Naive thymus-derived CD4-positive, alpha-beta T cell (primary cell): ENCODE measurements at regions of chr6 and their contacts with region 1.

Region 1: DNA sequence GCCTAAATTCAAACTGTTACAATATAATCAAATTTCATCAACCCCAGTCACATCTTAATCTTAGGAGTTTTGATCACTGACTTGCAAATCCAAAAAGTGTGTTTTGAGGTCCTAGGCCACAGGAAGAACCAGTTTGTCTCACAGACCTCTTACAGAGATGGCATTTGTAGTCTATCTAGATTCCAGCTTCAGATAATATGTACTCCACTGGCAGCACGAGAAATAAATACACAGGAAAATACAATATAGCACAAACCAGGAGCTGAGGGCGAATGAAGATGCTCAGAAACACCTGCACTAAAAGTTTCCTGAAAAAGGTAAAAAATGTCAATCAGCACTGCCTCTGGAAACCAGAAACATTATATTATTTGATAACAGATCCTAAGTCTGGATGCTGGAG is 647 bp upstream of the BTN3A3 start:
- DNase-seq: peak in 3 of 9 donors; percentile 7 to 35 (median 15)
- ATAC-seq: no peak
- H3K4me3 ChIP-seq: peak overlapping the region; percentile 94
- H3K4me3 Mint-ChIP-seq: peak overlapping the region; percentile 89 to 100 (median 98)
- H3K27ac ChIP-seq: peak overlapping the region; percentile 99
- H3K27ac Mint-ChIP-seq: peak overlapping the region; percentile 95 to 100 (median 99)
- H3K4me1 ChIP-seq: peaks cover 16 to 19% of the 10 kb centered on the region in 2 donors
- H3K4me1 Mint-ChIP-seq: peaks cover 27 to 52% (median 41%) of the 10 kb centered on the region in 7 donors
- H3K27me3 ChIP-seq: no peaks in the 10 kb centered on the region
- H3K27me3 Mint-ChIP-seq: no peaks in the 10 kb centered on the region

Region 2: GRCh38 chr6:26421259-26422144 is 18.2 kb before region 1 on chr6:
- CTCF ChIA-PET with region 1: no interaction called
- POLR2A ChIA-PET with region 1: no interaction called
- intact Hi-C with region 1: loop called (anchors 1 kb)
- DNase-seq: peak; percentile 11 to 71 (median 62)
- ATAC-seq: peak; percentile 96
- H3K4me3 ChIP-seq: peak overlapping the region; percentile 79
- H3K4me3 Mint-ChIP-seq: no peak overlapping the region
- H3K27ac ChIP-seq: peak overlapping the region; percentile 71
- H3K27ac Mint-ChIP-seq: peak overlapping the region in 2 of 9 donors; percentile 43 to 79
- H3K4me1 ChIP-seq: peaks cover 5 to 9% of the 10 kb centered on the region in 2 donors
- H3K4me1 Mint-ChIP-seq: peaks cover 0 to 16% (median 3%) of the 10 kb centered on the region in 7 donors
- H3K27me3 ChIP-seq: no peaks in the 10 kb centered on the region
- H3K27me3 Mint-ChIP-seq: no peaks in the 10 kb centered on the region

Region 3: DNA sequence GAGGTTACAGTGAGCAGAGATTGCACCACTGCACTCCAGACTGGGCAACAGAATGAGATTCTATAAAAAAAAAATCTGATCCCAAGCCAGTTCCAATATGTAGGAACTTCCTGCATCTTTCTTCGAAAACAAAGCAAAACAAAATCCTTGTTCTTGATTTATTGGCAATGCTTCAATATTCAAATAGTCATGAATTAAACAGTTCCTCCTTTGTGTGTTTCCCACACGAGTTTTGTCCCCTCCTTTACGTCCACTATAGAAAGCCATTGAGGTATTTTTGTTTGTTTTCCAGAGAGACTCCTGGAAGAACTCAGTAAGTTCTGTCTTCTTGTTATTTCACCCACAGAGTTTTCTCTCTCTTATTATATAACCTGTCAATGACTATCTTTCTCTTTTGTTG is 68.0 kb after region 1 on chr6:
- CTCF ChIA-PET with region 1: no interaction called
- POLR2A ChIA-PET with region 1: no interaction called
- intact Hi-C with region 1: no loop called
- DNase-seq: no peak
- ATAC-seq: no peak
- H3K4me3 ChIP-seq: no peak overlapping the region
- H3K4me3 Mint-ChIP-seq: no peak overlapping the region
- H3K27ac ChIP-seq: no peak overlapping the region
- H3K27ac Mint-ChIP-seq: no peak overlapping the region
- H3K4me1 ChIP-seq: no peaks in the 10 kb centered on the region
- H3K4me1 Mint-ChIP-seq: peaks cover 0 to 1% (median 0%) of the 10 kb centered on the region in 7 donors
- H3K27me3 ChIP-seq: peaks cover 6 to 9% of the 10 kb centered on the region in 2 donors
- H3K27me3 Mint-ChIP-seq: peaks cover 8 to 33% (median 11%) of the 10 kb centered on the region in 5 donors

Region 4: GRCh38 chr6:26532699-26533531 is 93.3 kb after region 1 on chr6:
- CTCF ChIA-PET with region 1: no interaction called
- POLR2A ChIA-PET with region 1: interaction called, 4 read pairs
- intact Hi-C with region 1: loop called in 1 of 2 experiments (anchors 1 kb)
- DNase-seq: peak; percentile 67 to 94 (median 93)
- ATAC-seq: peak; percentile 57
- H3K4me3 ChIP-seq: peak overlapping the region; percentile 93
- H3K4me3 Mint-ChIP-seq: peak overlapping the region; percentile 83 to 99 (median 96)
- H3K27ac ChIP-seq: peak overlapping the region; percentile 72
- H3K27ac Mint-ChIP-seq: peak overlapping the region; percentile 88 to 98 (median 97)
- H3K4me1 ChIP-seq: peaks cover 14 to 23% of the 10 kb centered on the region in 2 donors
- H3K4me1 Mint-ChIP-seq: peaks cover 17 to 70% (median 45%) of the 10 kb centered on the region in 7 donors
- H3K27me3 ChIP-seq: no peaks in the 10 kb centered on the region
- H3K27me3 Mint-ChIP-seq: peaks cover 0 to 7% (median 0%) of the 10 kb centered on the region in 5 donors

Region 5: GRCh38 chr6:26568601-26569432 is 129.2 kb after region 1 on chr6:
- CTCF ChIA-PET with region 1: no interaction called
- POLR2A ChIA-PET with region 1: no interaction called
- intact Hi-C with region 1: no loop called
- DNase-seq: peak; percentile 96 to 99 (median 98)
- ATAC-seq: peak; percentile 84
- H3K4me3 ChIP-seq: peak overlapping the region; percentile 90
- H3K4me3 Mint-ChIP-seq: peak overlapping the region; percentile 90 to 100 (median 95)
- H3K27ac ChIP-seq: peak overlapping the region; percentile 74
- H3K27ac Mint-ChIP-seq: peak overlapping the region; percentile 96 to 100 (median 99)
- H3K4me1 ChIP-seq: peaks cover 0 to 3% of the 10 kb centered on the region in 2 donors
- H3K4me1 Mint-ChIP-seq: peaks cover 11 to 42% (median 26%) of the 10 kb centered on the region in 7 donors
- H3K27me3 ChIP-seq: no peaks in the 10 kb centered on the region
- H3K27me3 Mint-ChIP-seq: peaks cover 0 to 12% (median 0%) of the 10 kb centered on the region in 5 donors

Region 6: GRCh38 chr6:27295301-27296081 is 855.8 kb after region 1 on chr6:
- CTCF ChIA-PET with region 1: no interaction called
- POLR2A ChIA-PET with region 1: no interaction called
- intact Hi-C with region 1: no loop called
- DNase-seq: no peak
- ATAC-seq: no peak
- H3K4me3 ChIP-seq: no peak overlapping the region
- H3K4me3 Mint-ChIP-seq: peak overlapping the region in 4 of 10 donors; percentile 0 to 81 (median 34)
- H3K27ac ChIP-seq: no peak overlapping the region
- H3K27ac Mint-ChIP-seq: peak overlapping the region in 6 of 9 donors; percentile 44 to 89 (median 57)
- H3K4me1 ChIP-seq: no peaks in the 10 kb centered on the region
- H3K4me1 Mint-ChIP-seq: peaks cover 0 to 4% (median 0%) of the 10 kb centered on the region in 7 donors
- H3K27me3 ChIP-seq: peaks cover 21 to 66% of the 10 kb centered on the region in 2 donors
- H3K27me3 Mint-ChIP-seq: peaks cover 65 to 94% (median 87%) of the 10 kb centered on the region in 5 donors